ENCODE measurements at regions of chr6 and their contacts with region 1.

Region 1: DNA sequence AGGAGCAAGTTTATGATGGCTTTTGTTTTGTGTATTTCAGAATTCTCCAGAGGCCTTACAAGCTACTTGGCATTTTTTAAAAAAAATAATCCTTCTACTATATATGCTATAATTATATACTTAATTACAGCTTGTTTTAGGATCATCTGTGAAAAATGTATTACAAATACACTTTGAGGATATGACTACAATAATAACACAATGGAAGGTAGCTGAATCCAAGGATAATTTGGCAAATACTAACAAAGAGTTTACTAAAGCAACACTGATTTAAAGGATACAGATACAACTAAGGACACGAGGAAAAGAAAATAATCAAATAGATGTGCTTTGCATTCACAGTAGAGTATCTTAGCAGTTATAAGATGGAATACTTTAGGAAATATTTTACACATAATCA is 381.9 kb upstream of the CITED2 start:
- DNase-seq: no peak
- ATAC-seq: no peak
- H3K4me3 Mint-ChIP-seq: no peak overlapping the region
- H3K27ac Mint-ChIP-seq: no peak overlapping the region
- H3K4me1 Mint-ChIP-seq: peaks cover 9% of the 10 kb centered on the region
- H3K27me3 Mint-ChIP-seq: no peaks in the 10 kb centered on the region
- CTCF ChIP-seq: no peak

Region 2: DNA sequence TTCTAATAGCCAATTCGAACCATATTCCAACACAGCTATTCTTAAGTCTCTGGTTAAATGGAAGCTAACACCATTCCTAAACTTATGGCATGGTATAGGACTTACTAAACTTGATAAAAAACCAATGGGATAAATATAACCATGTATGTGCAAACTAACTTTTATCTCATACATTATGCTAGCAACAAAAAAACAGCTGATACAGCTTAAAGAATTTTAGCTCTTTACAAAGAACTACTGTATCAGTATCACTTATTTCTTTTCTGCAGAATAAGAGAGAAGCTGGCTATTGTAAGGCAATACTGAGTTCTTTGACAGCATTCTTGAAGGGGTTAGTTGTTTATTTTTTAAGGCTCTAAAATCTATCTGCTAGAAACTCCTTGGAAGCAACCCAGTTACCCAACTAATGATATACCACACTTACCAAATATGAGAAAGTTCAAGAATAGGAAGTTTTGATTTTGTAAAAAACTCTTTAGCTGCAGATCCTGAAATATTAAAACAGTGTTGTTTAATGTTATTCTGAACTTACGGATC is 813.2 kb before region 1 on chr6:
- CTCF ChIA-PET with region 1: no interaction called
- POLR2A ChIA-PET with region 1: interaction called, 11 read pairs
- DNase-seq: no peak
- ATAC-seq: no peak
- H3K4me3 Mint-ChIP-seq: no peak overlapping the region
- H3K27ac Mint-ChIP-seq: no peak overlapping the region
- H3K4me1 Mint-ChIP-seq: peaks cover 18% of the 10 kb centered on the region
- H3K27me3 Mint-ChIP-seq: no peaks in the 10 kb centered on the region
- CTCF ChIP-seq: no peak

Measured in WTC11 (cell line).